Motor neuron (in vitro differentiated cells): ENCODE measurements at regions of chr4 and their contacts with region 1.

Region 1: DNA sequence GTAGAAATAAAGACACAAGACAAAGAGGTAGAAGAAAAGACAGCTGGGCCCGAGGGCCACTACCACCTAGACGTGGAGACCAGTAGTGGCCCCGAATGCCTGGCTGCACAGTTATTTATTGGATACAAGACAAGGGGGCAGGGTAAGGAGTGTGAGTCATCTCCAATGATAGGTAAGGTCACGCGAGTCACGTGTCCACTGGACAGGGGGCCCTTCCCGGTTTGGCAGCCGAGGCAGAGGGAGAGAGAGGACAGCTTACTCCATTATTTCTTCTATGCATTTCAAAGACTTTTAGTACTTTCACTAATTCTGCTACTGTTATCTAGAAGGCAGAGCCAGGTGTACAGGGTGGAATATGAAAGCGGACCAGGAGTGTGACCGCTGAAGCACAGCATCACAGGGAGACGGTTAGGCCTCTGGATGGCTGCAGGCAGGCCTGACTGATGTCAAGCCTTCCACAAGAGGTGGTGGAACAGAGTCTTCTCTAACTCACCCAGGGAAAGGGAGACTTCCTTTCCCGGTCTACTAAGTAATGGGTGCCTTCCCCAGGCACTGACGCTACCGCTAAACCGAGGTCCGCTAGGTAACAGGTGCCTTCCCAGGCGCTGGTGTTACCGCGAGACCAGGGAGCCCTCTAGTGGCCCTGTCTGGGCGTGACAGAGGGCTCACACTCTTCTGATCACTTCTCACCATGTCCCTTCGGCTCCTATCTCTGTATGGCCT is 44.9 kb downstream of the ZBTB49 start:
- ATAC-seq: peak; percentile 13 to 83 (median 74)
- H3K4me3 ChIP-seq: no peak overlapping the region
- H3K27ac ChIP-seq: no peak overlapping the region
- H3K4me1 ChIP-seq: no peaks in the 10 kb centered on the region

Region 2: DNA sequence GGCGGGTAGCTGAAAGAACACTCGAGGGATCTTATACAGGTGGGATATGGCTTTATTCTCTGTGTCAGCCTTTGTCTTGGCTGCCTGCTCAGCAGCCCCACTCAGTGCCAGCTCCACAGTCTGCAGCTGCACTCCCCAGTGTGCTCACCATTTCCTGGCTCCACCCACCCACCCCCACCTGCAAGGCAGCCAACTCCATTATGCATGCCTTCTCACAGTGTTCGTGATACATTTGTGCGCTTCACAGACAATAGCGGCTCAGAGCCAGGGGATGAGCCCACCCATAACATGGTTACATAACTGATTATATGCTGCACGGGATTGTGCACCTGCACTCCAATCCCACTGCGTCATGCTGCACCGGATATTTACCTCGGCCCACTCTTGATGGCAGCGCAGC is 78.2 kb before region 1 on chr4:
- in situ Hi-C with region 1: loop called in 1 of 9 experiments (anchors 10 kb)
- ATAC-seq: peak in 3 of 8 experiments; percentile 74 to 84 (median 83)
- H3K4me3 ChIP-seq: no peak overlapping the region
- H3K27ac ChIP-seq: no peak overlapping the region
- H3K4me1 ChIP-seq: peaks cover 9% of the 10 kb centered on the region in 2 donors